ENCODE measurements at regions of chr3 and their contacts with region 1.

Region 1: DNA sequence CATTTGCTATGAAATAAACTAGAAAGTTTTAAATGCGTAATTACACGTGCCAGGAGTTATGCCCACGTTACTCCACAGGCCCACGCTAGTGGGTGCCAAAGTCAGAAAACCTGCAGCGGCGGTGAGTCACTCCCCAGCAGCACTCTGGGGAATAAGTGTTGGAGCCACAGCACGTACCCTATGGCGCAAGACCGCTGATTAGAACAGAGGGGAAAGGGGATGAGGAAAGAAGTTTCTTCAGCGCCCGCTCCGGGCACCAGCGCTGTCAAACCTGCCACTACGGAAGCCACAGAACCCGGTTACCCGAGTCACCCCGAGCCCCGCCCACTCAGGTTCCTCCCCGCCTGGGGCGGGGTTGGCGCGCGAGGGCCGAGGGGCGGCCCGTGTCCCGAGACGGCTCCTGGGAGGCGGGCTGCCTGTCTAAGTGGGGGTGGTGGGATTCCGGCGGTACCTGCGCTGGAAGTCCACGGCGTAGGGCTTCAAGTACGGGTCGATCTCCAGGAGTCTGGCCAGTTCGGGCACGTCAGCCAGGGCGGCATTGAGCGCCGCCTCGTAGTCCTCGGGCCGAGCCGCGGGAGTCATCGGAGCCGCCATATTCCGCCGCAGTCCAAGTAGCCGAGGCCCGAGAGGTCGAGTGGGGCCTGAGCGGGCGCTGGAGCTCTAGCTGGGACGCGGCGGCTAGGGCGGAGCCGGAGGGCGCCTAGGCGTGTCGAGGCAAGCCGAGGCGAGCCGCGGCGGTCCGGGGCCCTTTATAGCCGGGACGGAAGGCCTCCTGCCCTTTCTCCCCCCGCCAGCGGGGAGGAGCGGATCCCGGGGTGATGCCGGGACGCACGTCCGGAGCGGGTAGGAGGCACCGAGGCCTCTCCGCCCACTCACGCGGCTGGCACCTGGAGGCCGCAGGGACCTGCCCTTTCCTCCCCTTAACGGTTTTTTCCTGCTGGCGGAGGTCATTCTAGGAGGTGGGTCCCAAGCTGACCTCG is at the start of gene GBE1:
- DNase-seq: peak; percentile 95
- H3K4me3 ChIP-seq: peak within 1 kb of the TSS; percentile 73 to 84 (median 80)
- H3K27ac ChIP-seq: peak within 1 kb of the TSS; percentile 99
- H3K4me1 ChIP-seq: peaks cover 23% of the 10 kb centered on the region
- H3K27me3 ChIP-seq: no peaks in the 10 kb centered on the region
- CTCF ChIP-seq: peak; percentile 43 to 57
- total RNA-seq, gene GBE1: 39.0 to 80.9 TPM

Region 2: DNA sequence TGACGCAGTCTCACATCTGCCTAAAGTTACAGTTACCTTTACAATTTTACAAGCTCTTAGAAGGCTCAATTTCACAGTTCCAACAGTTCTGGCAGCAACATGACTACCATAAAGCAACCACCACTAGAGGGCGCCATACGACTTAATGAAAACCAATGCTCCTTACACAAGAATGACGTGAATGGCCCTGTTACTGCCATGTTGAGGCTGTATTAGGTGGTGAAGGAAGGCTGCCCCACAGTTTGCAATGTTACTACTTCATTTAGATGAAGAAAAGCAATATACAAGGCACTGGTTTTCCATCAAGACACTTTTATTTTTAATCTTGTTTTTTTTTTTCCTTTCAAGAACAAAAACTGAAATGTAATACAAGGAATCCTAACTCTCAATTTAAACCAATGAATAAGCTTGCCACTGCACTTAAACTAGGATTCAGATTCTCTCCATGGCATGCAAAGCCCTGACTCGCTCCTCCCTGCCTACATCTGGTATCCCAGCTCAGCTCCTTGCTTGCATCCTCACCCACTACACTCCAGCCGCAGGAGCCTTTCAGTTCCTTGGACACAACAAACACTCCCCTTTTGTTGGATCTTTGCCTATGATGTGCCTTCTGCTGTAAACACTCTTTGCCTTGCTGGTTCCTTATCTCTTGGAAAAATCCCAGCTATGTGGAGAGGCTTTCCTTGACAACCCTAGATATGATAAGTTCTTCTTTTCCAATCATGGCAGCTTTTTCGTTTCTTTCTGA is 270.5 kb before region 1 on chr3:
- CTCF ChIA-PET with region 1: no interaction called
- dilution Hi-C with region 1: no loop called
- in situ Hi-C with region 1: no loop called
- intact Hi-C with region 1: loop called (anchors 10 kb)
- DNase-seq: peak; percentile 72
- H3K4me3 ChIP-seq: no peak overlapping the region
- H3K27ac ChIP-seq: no peak overlapping the region
- H3K4me1 ChIP-seq: no peaks in the 10 kb centered on the region
- H3K27me3 ChIP-seq: no peaks in the 10 kb centered on the region
- CTCF ChIP-seq: peak; percentile 81

Region 3: DNA sequence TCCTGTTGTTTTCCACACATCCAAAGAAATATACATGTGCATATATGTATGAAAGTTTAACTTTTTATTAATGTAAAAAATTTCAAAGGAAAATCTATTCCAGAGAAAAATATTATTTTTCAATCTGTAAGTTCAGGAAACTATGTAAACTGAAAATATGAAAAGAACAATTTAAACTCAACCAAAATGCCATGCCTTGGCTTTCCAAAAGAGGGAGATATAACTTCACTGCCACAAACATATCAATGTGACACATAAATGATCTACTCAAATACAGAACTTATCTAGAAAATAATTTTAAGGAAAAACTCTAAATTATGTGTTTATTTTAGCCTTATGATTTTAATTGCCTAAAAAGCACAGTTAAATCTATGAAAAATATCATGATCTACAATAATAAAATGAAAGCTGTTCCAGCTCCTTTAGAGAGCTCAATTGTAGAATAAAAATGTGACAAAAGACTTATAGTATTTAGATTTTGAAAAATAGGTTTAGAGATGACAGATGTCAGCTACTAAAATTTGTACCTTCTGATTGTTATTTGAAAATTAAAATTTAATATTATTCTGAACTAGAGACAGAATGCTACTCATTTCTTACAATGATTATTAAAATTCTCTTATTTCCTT is 94.6 kb before region 1 on chr3:
- CTCF ChIA-PET with region 1: no interaction called
- dilution Hi-C with region 1: no loop called
- in situ Hi-C with region 1: no loop called
- intact Hi-C with region 1: loop called (anchors 1 kb)
- DNase-seq: no peak
- H3K4me3 ChIP-seq: no peak overlapping the region
- H3K27ac ChIP-seq: no peak overlapping the region
- H3K4me1 ChIP-seq: no peaks in the 10 kb centered on the region
- H3K27me3 ChIP-seq: no peaks in the 10 kb centered on the region
- CTCF ChIP-seq: peak; percentile 56 to 71

Region 4: DNA sequence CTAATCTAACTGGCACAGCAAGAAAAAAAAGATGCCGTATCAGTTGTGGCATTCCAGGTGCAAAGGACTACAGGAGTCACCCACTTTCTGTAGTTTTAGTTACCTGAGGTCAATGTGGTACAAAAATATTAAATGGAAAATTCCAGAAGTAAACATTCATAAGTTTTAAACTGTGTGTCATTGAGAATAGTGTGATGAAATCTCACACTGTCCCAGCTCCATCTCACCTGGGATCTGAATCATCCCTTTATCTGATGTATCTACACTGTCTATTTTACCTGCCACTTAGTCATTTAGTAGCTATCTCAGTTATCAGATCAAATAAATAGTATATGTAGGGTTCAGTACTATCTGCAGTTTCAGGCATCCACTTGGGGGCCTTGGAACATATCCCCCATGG is 26.5 kb before region 1 on chr3:
- CTCF ChIA-PET with region 1: interaction called, 4 read pairs
- dilution Hi-C with region 1: no loop called
- in situ Hi-C with region 1: no loop called
- intact Hi-C with region 1: loop called (anchors 2 kb)
- DNase-seq: peak; percentile 87
- H3K4me3 ChIP-seq: no peak overlapping the region
- H3K27ac ChIP-seq: peak overlapping the region; percentile 53
- H3K4me1 ChIP-seq: peaks cover 24% of the 10 kb centered on the region
- H3K27me3 ChIP-seq: no peaks in the 10 kb centered on the region
- CTCF ChIP-seq: no peak

Region 5: GRCh38 chr3:81743096-81744025 is 17.9 kb before region 1 on chr3:
- CTCF ChIA-PET with region 1: no interaction called
- dilution Hi-C with region 1: no loop called
- in situ Hi-C with region 1: no loop called
- intact Hi-C with region 1: loop called (anchors 1 kb)
- DNase-seq: peak; percentile 83
- H3K4me3 ChIP-seq: peak overlapping the region in 1 of 3 experiments; percentile 39
- H3K27ac ChIP-seq: peak overlapping the region; percentile 93
- H3K4me1 ChIP-seq: peaks cover 32% of the 10 kb centered on the region
- H3K27me3 ChIP-seq: no peaks in the 10 kb centered on the region
- CTCF ChIP-seq: no peak

Measured in mammary epithelial cell (primary cell).